ENCODE measurements at regions of chr15 and their contacts with region 1.

Region 1: GRCh38 chr15:77013776-77014131 is 18.8 kb downstream of the PSTPIP1 start:
- DNase-seq: no peak
- ATAC-seq: peak; percentile 66
- H3K4me3 ChIP-seq: no peak overlapping the region
- H3K4me3 Mint-ChIP-seq: peak overlapping the region; percentile 48
- H3K27ac ChIP-seq: peak overlapping the region in 1 of 2 donors; percentile 47
- H3K27ac Mint-ChIP-seq: peak overlapping the region; percentile 81
- H3K4me1 ChIP-seq: peaks cover 57 to 82% of the 10 kb centered on the region in 2 donors
- H3K4me1 Mint-ChIP-seq: peaks cover 68% of the 10 kb centered on the region
- H3K27me3 ChIP-seq: no peaks in the 10 kb centered on the region
- H3K27me3 Mint-ChIP-seq: no peaks in the 10 kb centered on the region
- CTCF ChIP-seq: no peak

Region 2: DNA sequence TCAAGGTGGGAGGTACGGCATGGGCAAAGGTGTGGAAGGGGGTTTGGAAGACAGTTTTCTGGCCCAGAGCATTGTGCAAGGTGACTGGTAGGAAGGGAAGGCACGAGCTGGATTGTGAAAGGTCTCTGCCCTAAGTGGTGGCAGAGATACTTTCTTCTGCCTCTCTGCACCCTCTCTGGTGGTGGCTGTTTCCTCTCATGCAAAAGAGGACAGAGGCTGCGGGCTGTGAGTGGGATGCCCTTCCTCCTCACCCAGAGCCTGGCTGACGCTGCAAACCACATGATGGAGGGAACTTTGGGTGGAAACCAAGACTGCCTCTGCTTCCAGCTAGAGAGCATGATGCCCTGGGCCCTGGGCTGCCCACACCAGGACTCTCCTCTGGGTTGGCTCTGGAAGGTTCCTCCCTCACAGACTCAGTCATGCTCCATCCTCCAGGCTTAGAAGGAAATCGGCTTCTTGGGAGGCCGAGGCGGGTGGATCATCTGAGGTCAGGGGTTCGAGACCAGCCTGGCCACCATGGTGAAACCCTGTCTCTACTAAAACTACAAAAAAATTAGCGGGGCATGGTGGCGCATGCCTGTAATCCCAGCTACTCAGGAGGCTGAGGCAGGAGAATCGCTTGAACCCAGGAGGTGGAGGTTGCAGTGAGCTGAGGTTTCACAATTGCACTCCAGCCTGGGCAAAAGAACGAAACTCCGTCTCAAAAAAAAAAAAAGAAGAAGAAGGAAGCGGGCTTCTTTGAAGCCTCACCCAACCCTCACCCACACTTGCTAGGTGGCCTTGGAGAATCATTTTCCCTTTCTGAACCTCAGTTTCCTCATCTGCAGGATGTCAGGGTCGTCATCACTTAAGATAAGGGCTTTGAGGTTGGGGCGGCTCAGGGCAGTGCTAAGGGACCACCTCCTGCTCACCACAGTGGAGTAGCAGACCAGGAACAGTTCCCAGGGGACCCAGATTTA is 10.5 kb before region 1 on chr15:
- CTCF ChIA-PET with region 1: interaction called, 3 read pairs
- POLR2A ChIA-PET with region 1: interaction called, 3 read pairs
- intact Hi-C with region 1: loop called (anchors 1 kb)
- DNase-seq: peak; percentile 78
- ATAC-seq: peak; percentile 89
- H3K4me3 ChIP-seq: peak overlapping the region in 2 of 5 experiments; percentile 6 to 21
- H3K4me3 Mint-ChIP-seq: peak overlapping the region; percentile 80
- H3K27ac ChIP-seq: peak overlapping the region; percentile 23 to 44
- H3K27ac Mint-ChIP-seq: peak overlapping the region; percentile 84
- H3K4me1 ChIP-seq: peaks cover 38 to 49% of the 10 kb centered on the region in 2 donors
- H3K4me1 Mint-ChIP-seq: peaks cover 53% of the 10 kb centered on the region
- H3K27me3 ChIP-seq: no peaks in the 10 kb centered on the region
- H3K27me3 Mint-ChIP-seq: no peaks in the 10 kb centered on the region
- CTCF ChIP-seq: no peak

Measured in B cell (primary cell).